Caco-2 (cell line): ENCODE measurements at regions of chrX and their contacts with region 1.

Region 1: DNA sequence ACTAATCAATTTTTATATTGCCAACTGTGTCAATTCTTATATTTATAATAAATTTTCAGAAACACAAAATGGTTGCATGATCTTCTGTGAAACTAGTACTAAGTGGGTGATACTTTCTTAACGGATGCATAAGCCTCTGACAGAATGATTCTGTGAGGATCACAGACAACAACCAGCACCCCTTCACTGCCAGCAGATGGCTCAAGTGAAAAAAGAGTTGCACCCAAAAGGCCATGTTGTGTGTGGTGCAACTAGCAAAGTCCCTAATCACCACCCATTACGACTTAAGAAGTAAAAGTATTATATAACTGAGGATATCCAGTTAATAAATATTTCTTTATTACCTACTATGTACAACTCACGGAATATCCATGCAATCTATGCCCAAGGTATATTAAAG is 334.0 kb downstream of the PCDH19 start:
- DNase-seq: no peak
- H3K4me3 ChIP-seq: no peak overlapping the region
- H3K4me3 Mint-ChIP-seq: no peak overlapping the region
- H3K27ac Mint-ChIP-seq: no peak overlapping the region
- H3K4me1 ChIP-seq: no peaks in the 10 kb centered on the region
- H3K4me1 Mint-ChIP-seq: no peaks in the 10 kb centered on the region
- H3K27me3 ChIP-seq: no peaks in the 10 kb centered on the region
- H3K27me3 Mint-ChIP-seq: no peaks in the 10 kb centered on the region
- CTCF ChIP-seq: no peak

Region 2: DNA sequence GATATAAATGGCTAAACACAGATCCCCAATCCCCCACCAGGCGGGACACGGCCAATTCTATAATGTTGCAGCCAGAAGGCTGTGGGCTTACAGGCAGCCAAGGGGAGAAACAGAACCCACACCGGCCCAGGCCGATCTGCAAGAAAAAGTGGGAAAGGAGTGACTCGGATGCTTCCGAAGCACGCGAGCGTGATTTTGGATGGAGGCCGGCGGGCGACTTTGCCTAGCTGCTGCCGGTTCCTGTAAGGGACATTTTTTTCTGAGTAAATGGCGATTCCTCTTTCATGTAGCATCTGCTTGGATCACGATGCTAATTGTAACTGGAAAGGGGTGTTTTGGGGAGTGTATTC is 136.2 kb before region 1 on chrX:
- CTCF ChIA-PET with region 1: no interaction called
- POLR2A ChIA-PET with region 1: no interaction called
- intact Hi-C with region 1: no loop called
- DNase-seq: no peak
- H3K4me3 ChIP-seq: no peak overlapping the region
- H3K4me3 Mint-ChIP-seq: no peak overlapping the region
- H3K27ac Mint-ChIP-seq: no peak overlapping the region
- H3K4me1 ChIP-seq: no peaks in the 10 kb centered on the region
- H3K4me1 Mint-ChIP-seq: no peaks in the 10 kb centered on the region
- H3K27me3 ChIP-seq: no peaks in the 10 kb centered on the region; the same call in 1 of the 2 replicates
- H3K27me3 Mint-ChIP-seq: peaks cover 6% of the 10 kb centered on the region
- CTCF ChIP-seq: no peak

Region 3: DNA sequence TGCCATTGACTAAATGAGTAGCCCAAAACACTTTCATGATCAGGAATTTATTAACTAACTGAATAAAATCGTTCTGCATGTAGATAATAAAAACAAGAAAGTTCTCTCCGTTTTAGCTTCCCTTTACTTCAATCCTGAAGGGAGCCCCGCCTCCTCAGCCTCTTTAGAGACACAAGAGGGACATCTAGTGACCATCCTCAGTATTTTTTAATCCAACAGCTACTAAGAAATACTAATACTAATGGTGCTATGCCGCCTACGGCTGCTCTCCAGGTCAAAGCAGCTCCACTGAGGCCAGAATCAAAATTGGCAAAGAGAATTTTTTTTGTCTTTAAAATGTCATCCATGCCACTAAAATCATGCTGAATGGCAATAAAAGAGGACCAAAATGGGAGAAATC is 337.2 kb after region 1 on chrX:
- CTCF ChIA-PET with region 1: no interaction called
- POLR2A ChIA-PET with region 1: no interaction called
- intact Hi-C with region 1: loop called (anchors 5 kb)
- DNase-seq: peak in 1 of 2 experiments; percentile 55
- H3K4me3 ChIP-seq: no peak overlapping the region
- H3K4me3 Mint-ChIP-seq: no peak overlapping the region
- H3K27ac Mint-ChIP-seq: no peak overlapping the region
- H3K4me1 ChIP-seq: no peaks in the 10 kb centered on the region
- H3K4me1 Mint-ChIP-seq: peaks cover 5% of the 10 kb centered on the region
- H3K27me3 ChIP-seq: no peaks in the 10 kb centered on the region; the same call in 1 of the 2 replicates
- H3K27me3 Mint-ChIP-seq: peaks cover 14% of the 10 kb centered on the region
- CTCF ChIP-seq: no peak